ENCODE measurements at regions of chr4 and their contacts with region 1.

Region 1: GRCh38 chr4:86921608-86922252 is 13.1 kb upstream of the AFF1 start:
- DNase-seq: no peak
- ATAC-seq: no peak
- H3K4me3 ChIP-seq: no peak overlapping the region
- H3K27ac ChIP-seq: no peak overlapping the region
- H3K4me1 ChIP-seq: peaks cover 4% of the 10 kb centered on the region; the same call in 1 of the 2 replicates
- H3K27me3 ChIP-seq: no peaks in the 10 kb centered on the region
- CTCF ChIP-seq: no peak
- POLR2A ChIP-seq: no peak
- RAD21 ChIP-seq: no peak

Region 2: GRCh38 chr4:86934771-86935565 is 13.2 kb after region 1 on chr4 and contains the start of gene AFF1:
- CTCF ChIA-PET with region 1: interaction called, 14 read pairs
- POLR2A ChIA-PET with region 1: no interaction called
- dilution Hi-C with region 1: no loop called
- in situ Hi-C with region 1: no loop called
- intact Hi-C with region 1: no loop called
- DNase-seq: peak; percentile 79
- ATAC-seq: peak; percentile 94
- H3K4me3 ChIP-seq: peak within 1 kb of the TSS; percentile 80
- H3K27ac ChIP-seq: peak within 1 kb of the TSS; percentile 82
- H3K4me1 ChIP-seq: peaks cover 5% of the 10 kb centered on the region
- H3K27me3 ChIP-seq: no peaks in the 10 kb centered on the region
- CTCF ChIP-seq: peak; percentile 40
- POLR2A ChIP-seq: peak; percentile 78
- RAD21 ChIP-seq: 0 out of 2 replicates have a peak, but pooled peaks have one; percentile 15
- total RNA-seq, gene AFF1: 7.0 and 10.8 TPM in 2 replicates

Region 3: GRCh38 chr4:87078987-87079486 is 157.3 kb after region 1 on chr4:
- CTCF ChIA-PET with region 1: interaction called, 10 read pairs
- POLR2A ChIA-PET with region 1: no interaction called
- dilution Hi-C with region 1: no loop called
- in situ Hi-C with region 1: no loop called
- intact Hi-C with region 1: no loop called
- DNase-seq: peak; percentile 88
- ATAC-seq: peak; percentile 90
- H3K4me3 ChIP-seq: no peak overlapping the region; the same call in 1 of the 2 replicates
- H3K27ac ChIP-seq: peak overlapping the region; percentile 73
- H3K4me1 ChIP-seq: peaks cover 10% of the 10 kb centered on the region
- H3K27me3 ChIP-seq: no peaks in the 10 kb centered on the region
- CTCF ChIP-seq: no peak
- POLR2A ChIP-seq: no peak
- RAD21 ChIP-seq: peak; percentile 9; the same call in 1 of the 2 replicates

Region 4: DNA sequence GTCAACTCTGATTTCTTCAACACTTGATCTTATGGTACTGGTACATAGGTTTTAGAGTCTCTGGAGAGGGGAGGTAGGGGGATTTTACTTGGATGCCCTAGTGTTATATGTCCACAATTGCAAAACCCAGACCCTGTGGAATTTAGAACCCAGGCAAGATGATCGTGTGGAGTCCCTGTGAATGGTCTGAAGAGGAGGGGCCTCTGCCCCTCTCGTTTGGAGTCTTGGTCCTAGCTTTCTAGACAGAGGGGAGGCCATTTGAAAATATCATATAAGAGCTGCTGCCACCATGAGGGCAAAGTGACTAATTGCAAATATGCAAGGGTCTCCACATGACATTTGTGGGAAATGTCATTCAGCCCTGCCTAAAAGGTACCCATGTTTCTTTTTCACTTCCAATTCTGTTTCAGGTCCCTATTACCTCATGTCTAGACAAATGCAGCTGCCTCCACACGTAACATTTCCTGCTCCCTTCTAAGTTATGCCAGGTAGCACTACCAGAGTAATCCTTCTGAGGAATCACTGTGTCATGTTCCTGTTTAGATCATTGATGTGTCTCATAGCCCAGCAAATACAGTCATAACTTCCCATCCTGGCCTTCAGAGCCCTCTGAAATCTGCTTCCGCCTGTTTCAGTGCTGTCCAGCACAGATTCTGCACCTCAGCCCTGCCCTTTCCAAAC is 171.9 kb after region 1 on chr4:
- CTCF ChIA-PET with region 1: interaction called, 24 read pairs
- POLR2A ChIA-PET with region 1: no interaction called
- dilution Hi-C with region 1: no loop called
- in situ Hi-C with region 1: loop called (anchors 5 kb)
- intact Hi-C with region 1: loop called (anchors 1 kb)
- DNase-seq: peak; percentile 72
- ATAC-seq: peak; percentile 83
- H3K4me3 ChIP-seq: no peak overlapping the region
- H3K27ac ChIP-seq: no peak overlapping the region
- H3K4me1 ChIP-seq: peaks cover 2% of the 10 kb centered on the region; the same call in 1 of the 2 replicates
- H3K27me3 ChIP-seq: no peaks in the 10 kb centered on the region
- CTCF ChIP-seq: peak; percentile 56
- POLR2A ChIP-seq: no peak
- RAD21 ChIP-seq: peak; percentile 61

Region 5: DNA sequence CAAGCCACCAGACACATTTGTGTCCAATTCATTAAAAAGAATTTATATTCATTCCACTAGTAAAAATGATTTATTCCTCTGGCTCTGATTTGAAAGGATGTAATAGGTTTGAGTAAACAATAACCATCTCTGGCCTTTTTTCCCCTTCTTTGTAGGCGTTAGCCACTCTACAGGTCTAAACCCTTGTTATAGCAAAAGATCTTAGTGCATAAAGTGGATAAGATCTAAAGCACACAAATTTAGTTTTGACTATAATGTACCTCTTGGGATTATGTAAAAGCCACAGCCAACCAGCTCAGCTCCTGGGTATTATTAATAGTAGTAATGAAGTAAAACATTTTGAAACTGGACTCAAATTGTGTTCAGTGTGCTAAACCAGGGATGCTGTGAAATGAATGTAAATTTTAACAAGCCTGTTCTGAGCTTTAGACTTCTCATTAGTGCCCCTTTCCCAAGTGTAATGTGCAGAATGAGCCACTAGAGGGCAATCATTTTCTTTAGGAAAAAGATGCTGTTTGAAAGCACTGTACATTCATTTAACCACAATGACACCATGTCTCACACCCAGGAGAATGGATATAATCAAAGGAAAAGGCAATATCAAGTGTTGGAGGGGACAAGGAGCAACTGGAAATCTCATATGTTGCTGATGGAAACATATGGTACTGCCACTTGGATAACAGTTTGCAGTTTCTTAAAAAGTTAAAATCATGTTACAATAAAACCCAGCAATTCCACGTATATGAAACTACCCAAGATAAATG is 228.9 kb after region 1 on chr4:
- CTCF ChIA-PET with region 1: interaction called, 3 read pairs
- POLR2A ChIA-PET with region 1: no interaction called
- dilution Hi-C with region 1: no loop called
- in situ Hi-C with region 1: no loop called
- intact Hi-C with region 1: loop called (anchors 2 kb)
- DNase-seq: peak; percentile 71
- ATAC-seq: peak; percentile 89
- H3K4me3 ChIP-seq: no peak overlapping the region
- H3K27ac ChIP-seq: no peak overlapping the region
- H3K4me1 ChIP-seq: no peaks in the 10 kb centered on the region
- H3K27me3 ChIP-seq: no peaks in the 10 kb centered on the region
- CTCF ChIP-seq: peak; percentile 82
- POLR2A ChIP-seq: no peak
- RAD21 ChIP-seq: peak; percentile 80

Region 6: GRCh38 chr4:88659055-88659889 is 1737.5 kb after region 1 on chr4:
- CTCF ChIA-PET with region 1: no interaction called
- POLR2A ChIA-PET with region 1: no interaction called
- dilution Hi-C with region 1: no loop called
- in situ Hi-C with region 1: no loop called
- intact Hi-C with region 1: no loop called
- DNase-seq: peak; percentile 77
- ATAC-seq: peak; percentile 89
- H3K4me3 ChIP-seq: no peak overlapping the region
- H3K27ac ChIP-seq: no peak overlapping the region
- H3K4me1 ChIP-seq: peaks cover 15% of the 10 kb centered on the region
- H3K27me3 ChIP-seq: no peaks in the 10 kb centered on the region
- CTCF ChIP-seq: peak; percentile 69
- POLR2A ChIP-seq: no peak
- RAD21 ChIP-seq: peak; percentile 76

Measured in IMR-90 (cell line).